Activated CD4-positive, alpha-beta T cell treated with anti-CD3 and anti-CD28 coated beads for 36 hours (primary cell): ENCODE measurements at regions of chr11 and their contacts with region 1.

Region 1: GRCh38 chr11:27362749-27363575 is at the start of gene CCDC34:
- DNase-seq: peak; percentile 94
- ATAC-seq: peak; percentile 99
- H3K4me3 Mint-ChIP-seq: peak within 1 kb of the TSS; percentile 93
- H3K27ac Mint-ChIP-seq: peak within 1 kb of the TSS; percentile 89
- H3K4me1 Mint-ChIP-seq: peaks cover 22% of the 10 kb centered on the region
- H3K27me3 Mint-ChIP-seq: no peaks in the 10 kb centered on the region
- total RNA-seq, gene CCDC34: 24.6 to 42.4 TPM

Region 2: DNA sequence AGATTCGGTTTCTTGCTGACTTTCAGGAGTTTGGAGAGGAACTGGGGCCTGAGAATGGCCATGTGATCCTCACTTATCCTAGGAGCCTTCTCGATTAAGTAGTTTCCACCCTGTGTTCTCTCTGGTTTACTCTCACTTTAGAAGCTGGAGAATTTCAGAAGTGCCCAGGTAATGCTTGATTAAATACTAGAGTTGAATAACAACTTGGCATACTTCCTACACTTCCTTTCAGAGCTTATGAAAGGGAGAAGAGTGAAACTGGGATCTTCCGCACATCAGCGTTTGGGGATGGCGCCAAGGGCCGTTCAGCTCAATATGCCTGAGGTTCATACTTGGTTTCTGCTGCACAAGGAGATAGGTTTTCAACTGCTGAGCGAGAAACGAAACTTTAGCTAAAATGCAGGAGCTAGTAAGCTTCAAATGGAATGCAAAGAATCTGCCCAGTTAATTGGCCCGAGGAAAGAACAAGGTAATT is 790.1 kb before region 1 on chr11:
- CTCF ChIA-PET with region 1: no interaction called
- POLR2A ChIA-PET with region 1: no interaction called
- intact Hi-C with region 1: no loop called
- DNase-seq: no peak
- ATAC-seq: no peak
- H3K4me3 Mint-ChIP-seq: no peak overlapping the region
- H3K27ac Mint-ChIP-seq: no peak overlapping the region
- H3K4me1 Mint-ChIP-seq: no peaks in the 10 kb centered on the region
- H3K27me3 Mint-ChIP-seq: no peaks in the 10 kb centered on the region

Region 3: GRCh38 chr11:26946257-26946716 is 416.7 kb before region 1 on chr11:
- CTCF ChIA-PET with region 1: no interaction called
- POLR2A ChIA-PET with region 1: no interaction called
- intact Hi-C with region 1: no loop called
- DNase-seq: no peak
- ATAC-seq: no peak
- H3K4me3 Mint-ChIP-seq: no peak overlapping the region
- H3K27ac Mint-ChIP-seq: no peak overlapping the region
- H3K4me1 Mint-ChIP-seq: no peaks in the 10 kb centered on the region
- H3K27me3 Mint-ChIP-seq: no peaks in the 10 kb centered on the region

Region 4: GRCh38 chr11:27201454-27202236 is 161.3 kb before region 1 on chr11:
- CTCF ChIA-PET with region 1: no interaction called
- POLR2A ChIA-PET with region 1: no interaction called
- intact Hi-C with region 1: no loop called
- DNase-seq: no peak
- ATAC-seq: no peak
- H3K4me3 Mint-ChIP-seq: no peak overlapping the region
- H3K27ac Mint-ChIP-seq: no peak overlapping the region
- H3K4me1 Mint-ChIP-seq: no peaks in the 10 kb centered on the region
- H3K27me3 Mint-ChIP-seq: peaks cover 5% of the 10 kb centered on the region

Region 5: DNA sequence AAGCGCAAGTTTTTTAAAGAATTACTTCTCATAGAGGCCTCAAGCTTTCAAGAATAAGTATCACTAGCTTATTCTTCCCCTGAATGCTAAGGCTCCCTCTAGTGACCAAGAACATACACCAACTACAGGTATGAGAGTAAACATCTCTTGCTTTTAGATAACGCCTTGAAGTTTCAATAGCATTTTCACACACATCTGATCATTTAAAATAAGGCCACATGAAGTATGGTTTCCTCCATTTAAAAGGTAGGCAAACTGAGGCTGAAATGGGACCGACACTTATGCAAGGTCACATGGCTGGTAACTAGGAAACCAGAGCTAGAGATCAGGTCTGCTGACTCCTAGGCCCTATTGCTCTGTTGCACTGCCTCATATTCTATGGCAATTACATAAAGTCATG is 66.5 kb before region 1 on chr11:
- CTCF ChIA-PET with region 1: interaction called, 3 read pairs
- POLR2A ChIA-PET with region 1: no interaction called
- intact Hi-C with region 1: loop called in 1 of 2 experiments (anchors 1 kb)
- DNase-seq: no peak
- ATAC-seq: peak; percentile 27
- H3K4me3 Mint-ChIP-seq: no peak overlapping the region
- H3K27ac Mint-ChIP-seq: no peak overlapping the region
- H3K4me1 Mint-ChIP-seq: peaks cover 7% of the 10 kb centered on the region
- H3K27me3 Mint-ChIP-seq: peaks cover 22% of the 10 kb centered on the region

Region 6: DNA sequence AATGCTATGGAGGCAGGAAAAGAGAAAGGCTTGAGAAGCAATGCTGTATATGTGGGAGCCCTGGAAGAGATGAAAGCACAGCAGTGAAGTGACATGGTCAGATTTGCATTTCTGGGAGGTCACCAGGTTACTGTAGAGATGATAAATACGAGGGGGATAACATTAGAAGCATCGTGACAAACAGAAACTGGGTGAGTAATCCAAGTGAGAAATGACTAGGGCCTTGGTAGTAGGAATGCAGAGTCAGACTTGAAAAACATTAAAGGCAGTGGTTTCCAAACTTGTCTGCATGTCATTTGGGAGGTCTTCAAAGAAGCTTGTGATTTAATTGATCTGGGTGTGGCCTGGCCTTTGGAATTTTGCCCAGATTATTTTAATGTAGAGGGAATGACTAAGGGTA is 43.9 kb before region 1 on chr11:
- CTCF ChIA-PET with region 1: no interaction called
- POLR2A ChIA-PET with region 1: no interaction called
- intact Hi-C with region 1: loop called in 1 of 2 experiments (anchors 1 kb)
- DNase-seq: peak; percentile 16
- ATAC-seq: peak; percentile 97
- H3K4me3 Mint-ChIP-seq: no peak overlapping the region
- H3K27ac Mint-ChIP-seq: no peak overlapping the region
- H3K4me1 Mint-ChIP-seq: peaks cover 13% of the 10 kb centered on the region
- H3K27me3 Mint-ChIP-seq: peaks cover 12% of the 10 kb centered on the region

Region 7: DNA sequence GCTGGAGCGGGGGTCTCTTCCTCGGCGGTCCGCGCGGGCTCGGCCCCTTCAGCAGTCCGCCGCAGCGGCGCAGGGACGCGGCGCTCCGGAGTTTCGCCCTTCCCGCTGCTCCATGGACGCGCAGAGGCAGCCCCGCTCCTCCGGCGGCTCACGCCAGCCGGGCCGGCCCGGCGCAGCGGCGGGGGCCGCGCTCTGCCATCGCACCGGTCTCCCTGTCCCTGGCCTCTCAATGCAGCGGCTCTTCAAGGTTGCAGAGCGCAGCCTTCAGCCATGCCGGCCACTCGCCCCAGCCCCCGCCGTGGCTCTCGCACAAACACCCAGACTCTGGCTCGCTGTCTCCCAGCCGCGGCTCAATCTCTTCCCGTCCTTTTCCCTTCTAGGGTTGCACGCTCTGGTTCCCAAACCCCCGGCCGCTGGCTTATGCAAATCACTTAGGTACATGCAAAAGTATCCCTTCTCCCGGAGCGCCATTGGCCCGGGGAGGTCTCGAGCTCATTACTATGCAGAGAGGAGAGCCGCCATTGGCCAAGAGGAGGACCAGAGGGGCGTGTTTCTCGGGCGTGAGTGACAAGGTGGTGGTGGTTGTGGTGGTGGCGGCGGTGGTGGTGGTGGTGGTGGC is 109.5 kb after region 1 on chr11 and contains the start of gene LGR4:
- CTCF ChIA-PET with region 1: interaction called, 4 read pairs
- POLR2A ChIA-PET with region 1: no interaction called
- intact Hi-C with region 1: loop called (anchors 1 to 5 kb)
- DNase-seq: peak; percentile 80
- ATAC-seq: peak; percentile 90
- H3K4me3 Mint-ChIP-seq: peak within 1 kb of the TSS; percentile 89
- H3K27ac Mint-ChIP-seq: peak within 1 kb of the TSS; percentile 67
- H3K4me1 Mint-ChIP-seq: peaks cover 16% of the 10 kb centered on the region
- H3K27me3 Mint-ChIP-seq: peaks cover 26% of the 10 kb centered on the region
- total RNA-seq, gene LGR4: 0.19 to 0.21 TPM

Region 8: GRCh38 chr11:27506200-27507182 is 143.5 kb after region 1 on chr11 and contains the start of gene LIN7C:
- CTCF ChIA-PET with region 1: no interaction called
- POLR2A ChIA-PET with region 1: no interaction called
- intact Hi-C with region 1: loop called (anchors 1 kb)
- DNase-seq: peak; percentile 98
- ATAC-seq: peak; percentile 93
- H3K4me3 Mint-ChIP-seq: peak within 1 kb of the TSS; percentile 84
- H3K27ac Mint-ChIP-seq: peak within 1 kb of the TSS; percentile 99
- H3K4me1 Mint-ChIP-seq: peaks cover 36% of the 10 kb centered on the region
- H3K27me3 Mint-ChIP-seq: no peaks in the 10 kb centered on the region
- total RNA-seq, gene LIN7C: 16.1 to 19.2 TPM

Region 9: GRCh38 chr11:27599217-27599616 is 236.3 kb after region 1 on chr11:
- CTCF ChIA-PET with region 1: no interaction called
- POLR2A ChIA-PET with region 1: no interaction called
- intact Hi-C with region 1: no loop called
- DNase-seq: no peak
- ATAC-seq: no peak
- H3K4me3 Mint-ChIP-seq: no peak overlapping the region
- H3K27ac Mint-ChIP-seq: no peak overlapping the region
- H3K4me1 Mint-ChIP-seq: no peaks in the 10 kb centered on the region
- H3K27me3 Mint-ChIP-seq: no peaks in the 10 kb centered on the region

Region 10: GRCh38 chr11:28107748-28108618 is 745.0 kb after region 1 on chr11 and contains the starts of genes KIF18A and METTL15:
- CTCF ChIA-PET with region 1: no interaction called
- POLR2A ChIA-PET with region 1: no interaction called
- intact Hi-C with region 1: loop called in 1 of 2 experiments (anchors 2 kb)
- DNase-seq: peak; percentile 99
- ATAC-seq: peak; percentile 95
- H3K4me3 Mint-ChIP-seq: peak within 1 kb of the TSS; percentile 98
- H3K27ac Mint-ChIP-seq: peak within 1 kb of the TSS; percentile 99
- H3K4me1 Mint-ChIP-seq: peaks cover 40% of the 10 kb centered on the region
- H3K27me3 Mint-ChIP-seq: no peaks in the 10 kb centered on the region
- total RNA-seq, gene KIF18A: 26.4 to 28.9 TPM
- total RNA-seq, gene METTL15: 13.0 to 16.0 TPM